GM10248 (cell line): ENCODE measurements at regions of chr16 and their contacts with region 1.

Region 1: GRCh38 chr16:74296432-74297144 is at the start of gene PSMD7:
- DNase-seq: peak; percentile 91
- CTCF ChIP-seq: no peak

Region 2: GRCh38 chr16:74257061-74257460 is 39.5 kb before region 1 on chr16:
- CTCF ChIA-PET with region 1: no interaction called
- POLR2A ChIA-PET with region 1: no interaction called
- DNase-seq: peak; percentile 28
- CTCF ChIP-seq: no peak

Region 3: GRCh38 chr16:74275002-74275636 is 21.5 kb before region 1 on chr16:
- CTCF ChIA-PET with region 1: interaction called, 16 read pairs
- POLR2A ChIA-PET with region 1: no interaction called
- DNase-seq: no peak
- CTCF ChIP-seq: peak; percentile 18

Region 4: GRCh38 chr16:74309789-74310781 is 13.5 kb after region 1 on chr16:
- CTCF ChIA-PET with region 1: interaction called, 38 read pairs
- POLR2A ChIA-PET with region 1: no interaction called
- DNase-seq: peak; percentile 57
- CTCF ChIP-seq: peak; percentile 69